ENCODE measurements at regions of chr22 and their contacts with region 1.

Region 1: DNA sequence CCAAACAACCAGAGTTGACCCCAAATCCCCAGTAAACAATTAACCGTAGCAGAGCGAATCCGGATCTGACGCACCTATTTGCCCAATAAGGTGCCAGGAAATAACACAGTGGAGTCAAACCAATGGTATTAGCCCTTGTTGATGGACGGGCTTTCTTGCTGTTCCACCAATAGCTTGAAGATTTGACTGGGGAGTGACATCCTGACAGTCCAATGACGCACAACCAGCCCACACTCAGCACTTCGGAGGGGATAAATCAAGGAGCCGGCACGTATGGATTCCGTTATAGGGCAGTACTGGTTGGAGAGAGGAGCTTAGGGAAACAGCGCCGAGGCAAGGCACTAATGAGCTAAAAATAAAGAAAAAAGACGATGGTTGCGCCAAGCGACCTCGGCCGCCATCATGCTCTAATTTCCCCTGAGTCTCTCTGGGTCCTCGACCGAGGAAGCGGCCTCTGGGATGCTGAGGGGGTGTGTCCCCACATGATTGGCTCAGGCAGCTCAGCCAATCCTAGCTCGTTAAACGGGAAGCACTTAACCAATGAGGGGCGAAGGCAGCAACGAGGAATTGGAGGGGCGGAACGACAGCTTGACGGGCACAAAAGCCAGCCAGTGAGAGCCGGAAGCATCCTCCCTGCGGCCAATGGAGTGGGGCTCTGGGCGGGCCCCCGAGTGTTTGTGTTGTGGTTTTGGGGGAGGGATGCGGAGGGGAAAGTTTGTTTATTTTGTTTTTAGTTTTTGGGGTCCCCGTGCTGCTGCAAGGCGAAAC is 49.5 kb downstream of the FAM83F start:
- DNase-seq: peak; percentile 98

Region 2: DNA sequence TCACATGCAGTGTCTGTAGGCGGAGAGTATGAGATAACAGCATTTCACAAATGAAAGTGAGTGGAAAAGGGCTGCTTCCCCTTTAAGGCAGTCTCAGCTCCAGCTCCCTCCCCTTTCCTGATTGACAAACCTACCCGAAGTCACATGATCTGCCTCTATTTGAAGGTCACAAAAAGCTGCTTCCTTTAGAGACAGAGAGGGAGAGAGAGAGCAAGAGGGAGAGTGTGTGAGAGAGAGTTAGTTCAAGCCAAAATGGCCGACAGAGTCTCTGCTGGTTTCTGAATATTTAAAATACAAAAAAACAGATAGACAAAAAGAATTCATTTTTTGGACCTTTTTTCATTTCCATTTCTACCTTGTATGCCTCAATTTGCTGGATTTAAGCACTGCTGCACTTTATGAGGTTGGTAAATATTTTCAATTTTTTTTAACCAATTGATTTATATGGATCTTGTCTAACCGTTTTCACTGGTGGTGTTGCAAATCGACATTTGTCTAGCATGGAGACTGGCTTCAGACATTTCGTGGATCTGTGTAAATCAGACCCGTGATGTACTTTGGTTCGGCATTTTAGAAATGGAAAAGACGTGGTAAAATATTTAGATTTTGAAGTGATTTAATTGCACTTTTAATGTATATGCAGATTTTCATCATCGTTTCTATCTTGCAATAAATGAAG is 133.6 kb after region 1 on chr22 and contains the start of gene TNRC6B:
- intact Hi-C with region 1: loop called (anchors 5 kb)
- DNase-seq: no peak
- total RNA-seq, gene TNRC6B: 40.2 TPM

Region 3: DNA sequence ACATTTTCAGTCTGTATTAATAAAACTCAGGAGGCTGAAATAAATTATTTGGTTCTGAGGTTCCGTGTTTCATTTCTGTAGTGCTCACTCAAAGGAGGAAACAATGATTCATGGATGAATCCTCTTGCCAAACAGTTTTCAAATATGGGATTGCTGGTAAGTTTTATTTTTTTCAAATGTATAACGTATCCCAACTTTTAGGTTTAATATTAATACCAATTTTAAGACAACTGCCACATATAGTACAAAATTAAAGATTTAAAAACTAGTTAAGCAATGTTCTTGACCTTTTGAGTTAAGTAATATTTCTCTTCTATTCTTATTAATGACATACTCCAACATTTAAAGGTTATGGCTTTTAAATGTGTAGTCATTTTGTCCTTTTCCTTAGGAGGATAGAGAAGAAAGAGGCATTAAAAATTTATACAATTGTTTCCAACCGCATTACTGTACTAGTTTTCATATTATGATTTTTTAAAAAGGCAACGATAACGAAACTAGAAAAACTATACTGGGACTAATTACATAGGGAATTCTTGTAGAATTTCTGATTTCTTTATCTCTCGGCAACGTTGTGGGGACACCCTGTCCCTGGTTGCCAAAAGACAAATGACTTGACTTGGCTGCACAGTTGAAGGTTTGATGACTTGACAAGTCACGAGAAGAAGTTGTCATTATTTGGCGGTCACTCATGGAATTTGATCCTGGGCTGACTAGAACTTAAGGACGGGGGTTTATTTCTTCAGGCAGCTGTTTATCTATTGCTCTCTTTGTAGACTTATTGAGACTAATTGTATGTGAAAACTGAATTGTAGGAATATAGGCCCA is 232.9 kb after region 1 on chr22:
- intact Hi-C with region 1: loop called (anchors 10 kb)
- DNase-seq: no peak

Region 4: DNA sequence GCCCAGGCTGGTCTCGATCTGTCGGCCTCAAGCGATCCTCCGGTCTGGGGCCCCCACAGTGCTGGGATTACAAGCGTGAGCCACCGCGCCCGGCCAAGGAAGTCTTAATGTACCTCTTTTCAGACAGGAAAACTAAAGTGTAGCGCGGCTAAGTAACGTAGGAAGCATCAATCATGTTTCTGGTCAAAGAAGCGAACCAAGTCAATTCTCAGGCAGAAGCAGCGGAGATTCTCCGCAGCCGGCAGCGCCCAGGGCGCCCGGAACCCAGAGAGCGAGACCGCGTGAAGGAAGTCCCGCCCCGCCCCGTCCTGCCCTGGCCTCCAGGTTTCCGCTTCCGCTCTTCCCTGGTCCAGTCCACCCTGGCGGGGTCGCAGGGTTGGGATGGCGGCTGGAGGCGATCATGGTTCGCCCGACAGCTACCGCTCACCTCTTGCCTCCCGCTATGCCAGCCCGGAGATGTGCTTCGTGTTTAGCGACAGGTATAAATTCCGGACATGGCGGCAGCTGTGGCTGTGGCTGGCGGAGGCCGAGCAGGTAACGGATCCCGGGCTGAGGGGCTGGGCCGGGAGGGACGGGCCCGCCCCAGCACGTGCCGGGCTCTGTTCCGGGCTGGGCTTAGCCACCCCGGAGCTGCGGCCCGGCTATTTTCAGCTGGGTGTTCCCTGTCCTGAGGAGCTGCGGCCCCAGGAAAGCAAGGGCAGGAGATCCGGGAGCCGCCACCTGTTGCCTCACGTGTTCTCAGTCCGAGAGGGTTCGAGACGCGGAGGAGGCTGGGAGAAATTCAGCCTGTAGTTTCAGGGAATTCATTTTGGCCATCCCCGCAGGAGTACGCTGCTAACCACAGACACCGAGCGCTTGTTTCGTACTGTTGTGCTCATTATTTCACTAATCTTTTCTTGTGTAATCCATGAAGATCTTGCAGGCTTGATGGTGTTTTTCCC is 302.2 kb after region 1 on chr22 and contains the start of gene ADSL:
- intact Hi-C with region 1: loop called (anchors 2 kb)
- DNase-seq: peak; percentile 95
- total RNA-seq, gene ADSL: 47.8 TPM

Region 5: DNA sequence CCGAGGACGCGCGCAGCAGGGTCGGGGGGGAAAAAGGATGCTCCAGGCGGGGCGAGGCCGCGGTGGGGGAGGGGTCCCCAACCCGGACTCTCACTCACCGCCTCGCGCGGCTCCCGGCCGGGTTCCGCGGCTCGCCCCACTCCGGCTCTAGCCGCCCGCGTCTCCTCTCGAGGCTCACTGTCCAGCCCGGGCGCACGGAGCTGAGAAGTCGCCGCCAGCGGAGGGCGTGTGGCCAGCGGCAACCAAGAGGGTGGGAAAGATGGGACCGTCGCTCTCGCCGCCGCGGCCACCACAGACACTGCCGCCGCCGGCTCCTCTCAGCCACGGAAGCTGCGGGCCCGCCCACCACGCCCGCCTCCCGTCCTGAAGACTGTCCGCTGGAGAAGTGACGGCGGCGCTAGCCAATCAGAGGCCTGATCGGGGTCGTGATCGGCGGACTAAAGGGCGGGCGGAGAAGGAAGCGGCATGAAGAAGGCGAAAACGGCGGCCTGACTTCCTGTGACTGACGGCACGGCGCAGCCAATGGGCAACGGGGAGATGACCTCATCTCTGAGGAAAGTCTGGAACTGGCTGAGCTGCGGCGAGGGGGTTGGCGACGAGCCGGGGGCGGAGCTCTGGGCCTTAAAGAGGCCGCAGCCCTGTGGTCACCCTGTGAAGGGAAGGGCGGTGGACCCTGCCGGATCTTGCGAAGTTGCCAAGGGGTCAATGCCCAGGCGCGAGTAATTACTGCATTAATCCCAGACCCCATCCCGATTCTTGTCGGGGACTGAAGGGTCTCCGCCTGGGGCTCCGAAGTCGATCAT is 592.3 kb after region 1 on chr22 and contains the start of gene MRTFA:
- intact Hi-C with region 1: loop called (anchors 10 kb)
- DNase-seq: peak; percentile 100
- total RNA-seq, gene MRTFA: 24.3 TPM

Region 6: DNA sequence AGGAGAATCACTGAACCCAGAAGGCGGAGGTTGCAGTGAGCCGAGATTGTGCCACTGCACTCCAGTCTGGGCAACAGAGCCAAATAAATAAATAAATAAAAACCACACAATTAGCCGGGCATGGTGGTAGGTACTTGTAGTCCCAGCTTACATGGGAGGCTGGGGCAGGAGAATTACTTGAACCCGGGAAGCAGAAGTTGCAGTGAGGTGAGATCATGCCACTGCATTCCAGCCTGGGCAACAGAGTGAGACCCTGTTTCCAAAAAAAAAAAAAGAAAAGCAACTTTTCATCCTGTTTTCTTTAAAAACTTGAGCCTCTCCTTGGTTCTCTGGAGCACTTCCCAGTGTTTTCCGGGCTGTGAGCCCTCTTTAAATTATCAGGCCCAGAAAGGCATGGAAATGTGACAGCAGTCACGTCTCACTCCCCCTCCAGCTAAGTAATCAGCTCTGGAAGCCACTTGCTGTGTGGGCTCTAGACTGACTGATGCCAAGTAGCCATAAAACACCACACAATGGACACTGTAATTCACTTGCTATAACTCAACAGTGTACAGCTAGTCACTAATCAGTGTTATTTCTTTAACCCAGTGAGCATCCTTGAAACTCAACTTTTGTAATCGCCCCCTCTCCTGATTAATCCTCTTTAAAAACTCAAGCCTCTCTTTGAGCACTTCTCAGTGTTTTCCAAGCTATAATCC is 622.0 kb after region 1 on chr22:
- intact Hi-C with region 1: no loop called
- DNase-seq: no peak

Measured in cardiac septum (tissue), 1 donor.